AG04450 (cell line): ENCODE measurements at regions of chr3 and their contacts with region 1.

Region 1: DNA sequence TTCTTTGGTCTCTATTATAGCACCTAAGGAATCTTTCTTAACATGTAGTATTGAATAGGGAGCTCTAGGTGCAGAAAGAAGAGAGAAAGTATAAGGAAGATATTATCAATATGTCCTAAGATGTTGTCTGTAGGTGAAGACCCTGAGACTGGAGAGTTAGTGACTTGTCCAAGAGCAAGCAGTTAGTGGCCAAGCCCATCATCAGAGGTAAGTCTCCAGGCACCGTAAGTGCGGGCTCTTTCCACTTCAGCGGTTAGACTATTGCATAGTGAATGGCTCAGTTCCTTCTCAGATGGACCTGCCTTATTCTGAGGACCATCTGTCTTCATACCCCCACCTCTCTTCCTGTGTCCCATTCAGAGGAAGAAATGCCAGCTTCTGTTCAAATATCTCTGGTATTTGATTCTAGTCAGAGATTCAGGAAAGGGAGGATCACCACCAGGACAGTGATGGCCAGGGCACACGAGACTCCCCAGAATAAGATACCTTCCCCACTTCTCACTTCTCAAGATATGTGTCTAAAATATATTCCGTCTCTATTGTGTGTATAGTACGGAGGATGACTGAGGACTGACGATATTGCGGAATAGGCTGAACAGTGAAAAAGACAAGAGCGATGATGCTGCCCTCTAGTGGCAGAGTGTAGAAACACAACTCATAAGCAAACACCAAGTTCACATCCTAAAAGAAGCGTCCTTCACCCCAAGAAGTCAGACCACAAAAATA is 19.1 kb upstream of the ADGRG7 start:
- DNase-seq: peak; percentile 44
- H3K4me3 ChIP-seq: peak overlapping the region; percentile 5; the same call in 1 of the 2 replicates
- H3K27ac ChIP-seq: no peak overlapping the region
- H3K27me3 ChIP-seq: peaks cover 4% of the 10 kb centered on the region
- CTCF ChIP-seq: peak; percentile 92

Region 2: DNA sequence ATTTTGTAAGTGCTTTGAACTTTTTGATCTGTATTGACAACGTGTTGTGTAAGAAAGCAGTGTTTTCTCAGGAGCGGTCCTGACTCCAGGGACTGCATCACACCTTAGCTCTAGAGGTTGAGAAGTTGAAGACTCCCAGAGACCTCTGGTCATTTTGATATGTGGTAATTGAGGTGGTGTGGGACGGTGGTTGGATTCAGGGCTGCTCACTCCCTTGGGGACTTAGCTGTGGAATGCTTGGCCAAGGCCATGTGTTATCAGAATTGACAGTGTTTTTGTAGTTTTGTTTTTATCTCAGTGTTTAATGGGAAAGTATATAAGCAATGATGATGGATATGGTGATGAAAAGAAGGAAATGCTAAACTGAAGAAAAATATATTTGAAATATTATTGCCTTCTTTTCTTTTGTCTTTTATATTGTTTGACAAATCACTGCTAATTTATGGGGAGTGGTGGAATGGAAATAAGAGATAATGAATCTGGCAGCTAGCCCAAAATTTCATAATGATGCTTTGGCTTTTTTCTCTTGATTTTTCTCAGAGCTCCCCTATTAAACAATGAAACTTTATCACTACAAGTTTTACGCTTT is 756.6 kb before region 1 on chr3:
- CTCF ChIA-PET with region 1: interaction called, 22 read pairs
- POLR2A ChIA-PET with region 1: no interaction called
- DNase-seq: no peak
- H3K4me3 ChIP-seq: no peak overlapping the region
- H3K27ac ChIP-seq: no peak overlapping the region
- H3K27me3 ChIP-seq: no peaks in the 10 kb centered on the region
- CTCF ChIP-seq: no peak

Region 3: GRCh38 chr3:100316641-100317069 is 273.6 kb before region 1 on chr3:
- CTCF ChIA-PET with region 1: interaction called, 11 read pairs
- POLR2A ChIA-PET with region 1: no interaction called
- DNase-seq: peak; percentile 26
- H3K4me3 ChIP-seq: no peak overlapping the region
- H3K27ac ChIP-seq: no peak overlapping the region
- H3K27me3 ChIP-seq: no peaks in the 10 kb centered on the region
- CTCF ChIP-seq: peak; percentile 75

Region 4: GRCh38 chr3:100468676-100469075 is 121.6 kb before region 1 on chr3:
- CTCF ChIA-PET with region 1: interaction called, 398 read pairs
- POLR2A ChIA-PET with region 1: no interaction called
- DNase-seq: no peak
- H3K4me3 ChIP-seq: no peak overlapping the region
- H3K27ac ChIP-seq: no peak overlapping the region
- H3K27me3 ChIP-seq: peaks cover 2% of the 10 kb centered on the region
- CTCF ChIP-seq: no peak

Region 5: DNA sequence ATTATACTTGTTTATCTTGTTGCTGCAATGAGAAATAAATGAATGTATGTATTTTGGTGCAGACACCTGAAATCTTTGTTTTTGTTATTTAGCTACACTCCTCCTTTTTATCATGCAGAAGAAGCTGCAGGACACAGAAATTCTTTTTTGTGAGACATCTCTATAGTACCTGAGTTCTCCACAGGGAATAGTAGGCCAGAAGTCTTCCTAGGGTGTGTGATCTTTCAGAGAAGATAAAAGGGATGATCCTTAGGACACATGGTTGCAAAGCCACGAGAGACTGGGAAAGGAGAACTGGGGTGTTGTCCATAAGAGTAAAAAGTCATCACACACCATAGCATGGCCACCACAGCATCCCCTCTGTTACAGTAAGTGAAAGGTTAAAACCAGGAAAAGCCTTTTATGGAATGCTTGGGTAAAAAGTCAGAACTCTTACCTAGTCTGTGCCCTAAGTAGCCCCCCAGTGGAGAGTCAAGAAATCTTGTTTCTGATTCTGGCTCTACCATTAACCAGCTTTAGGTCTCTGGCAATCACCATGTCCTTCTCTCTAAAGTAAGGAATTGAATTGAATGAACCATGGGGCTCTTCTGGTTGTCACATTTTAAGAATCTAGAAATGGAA is 12.8 kb before region 1 on chr3:
- CTCF ChIA-PET with region 1: interaction called, 14 read pairs
- POLR2A ChIA-PET with region 1: no interaction called
- DNase-seq: no peak
- H3K4me3 ChIP-seq: no peak overlapping the region
- H3K27ac ChIP-seq: no peak overlapping the region
- H3K27me3 ChIP-seq: no peaks in the 10 kb centered on the region
- CTCF ChIP-seq: no peak

Region 6: DNA sequence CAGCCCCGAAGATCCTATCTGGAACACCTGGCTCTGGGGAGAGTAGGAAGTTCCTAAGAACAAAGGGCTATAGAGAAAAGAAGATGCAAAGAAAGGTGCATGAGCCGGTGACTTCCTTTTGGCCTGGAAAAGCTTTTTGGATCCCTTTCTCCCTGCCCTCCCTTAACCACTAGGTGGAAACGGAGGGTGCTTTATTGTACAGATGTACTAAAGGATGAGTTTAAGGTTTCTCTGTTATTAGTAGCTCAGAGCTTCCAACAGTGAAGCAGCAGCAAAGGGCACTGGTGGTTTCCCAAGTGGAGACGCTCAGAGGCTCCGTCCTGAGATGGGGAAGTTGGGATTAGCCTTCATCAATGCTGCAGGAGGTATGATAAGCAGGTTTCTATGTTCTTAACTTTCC is 13.2 kb after region 1 on chr3:
- CTCF ChIA-PET with region 1: interaction called, 11 read pairs
- POLR2A ChIA-PET with region 1: no interaction called
- DNase-seq: no peak
- H3K4me3 ChIP-seq: no peak overlapping the region
- H3K27ac ChIP-seq: peak overlapping the region; percentile 21
- H3K27me3 ChIP-seq: peaks cover 2% of the 10 kb centered on the region
- CTCF ChIP-seq: peak; percentile 68

Region 7: DNA sequence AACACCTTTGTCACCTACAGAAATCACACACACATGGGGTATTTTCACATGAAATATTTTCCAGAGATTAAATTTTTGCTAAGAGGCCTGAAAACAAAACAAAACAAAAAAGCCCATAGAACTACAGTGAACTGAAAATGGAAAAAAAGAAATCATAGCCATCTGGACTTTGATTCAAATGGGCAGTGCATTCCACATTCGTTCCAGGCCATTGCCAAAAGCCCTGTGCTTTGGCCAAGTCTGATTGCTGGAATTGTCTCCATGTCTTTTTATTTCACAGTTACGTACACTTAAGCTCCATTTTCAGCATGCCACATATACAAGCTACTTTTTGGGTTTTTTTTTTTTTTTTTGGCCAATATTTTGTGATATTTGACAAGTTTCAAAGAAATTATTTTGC is 166.2 kb after region 1 on chr3:
- CTCF ChIA-PET with region 1: no interaction called
- POLR2A ChIA-PET with region 1: no interaction called
- DNase-seq: no peak
- H3K4me3 ChIP-seq: no peak overlapping the region
- H3K27ac ChIP-seq: no peak overlapping the region
- H3K27me3 ChIP-seq: no peaks in the 10 kb centered on the region
- CTCF ChIP-seq: no peak